GM18951 (cell line): ENCODE measurements at regions of chr5 and their contacts with region 1.

Region 1: GRCh38 chr5:127564002-127564769 is 46.7 kb downstream of the PRRC1 start:
- POLR2A ChIP-seq: no peak

Region 2: GRCh38 chr5:127260686-127261085 is 303.5 kb before region 1 on chr5:
- in situ Hi-C with region 1: no loop called
- POLR2A ChIP-seq: no peak

Region 3: GRCh38 chr5:127757576-127757975 is 193.4 kb after region 1 on chr5:
- in situ Hi-C with region 1: loop called (anchors 5 kb)
- POLR2A ChIP-seq: no peak

Region 4: DNA sequence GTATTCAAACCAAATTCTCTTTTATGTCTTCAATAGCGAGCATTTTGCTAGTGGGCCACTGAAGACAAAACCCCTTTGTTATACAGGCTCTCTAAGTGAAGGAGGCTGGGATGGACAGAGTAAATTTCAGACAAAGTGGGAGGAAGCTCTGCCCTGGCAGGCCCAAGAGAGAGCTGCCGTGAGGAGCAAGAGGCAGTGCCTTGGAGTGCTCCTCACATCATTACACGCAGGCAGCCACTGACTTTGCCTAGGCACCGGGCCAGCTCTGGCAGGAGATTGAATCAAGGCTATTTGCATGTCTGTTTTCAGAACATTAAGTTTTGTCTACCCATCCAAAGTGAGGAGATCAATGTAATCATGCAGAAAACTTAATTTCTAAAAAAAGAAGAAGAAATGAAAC is 306.7 kb after region 1 on chr5:
- in situ Hi-C with region 1: loop called (anchors 25 kb)
- POLR2A ChIP-seq: no peak

Region 5: GRCh38 chr5:128201065-128201926 is 637.1 kb after region 1 on chr5:
- in situ Hi-C with region 1: loop called (anchors 5 kb)
- POLR2A ChIP-seq: no peak

Region 6: DNA sequence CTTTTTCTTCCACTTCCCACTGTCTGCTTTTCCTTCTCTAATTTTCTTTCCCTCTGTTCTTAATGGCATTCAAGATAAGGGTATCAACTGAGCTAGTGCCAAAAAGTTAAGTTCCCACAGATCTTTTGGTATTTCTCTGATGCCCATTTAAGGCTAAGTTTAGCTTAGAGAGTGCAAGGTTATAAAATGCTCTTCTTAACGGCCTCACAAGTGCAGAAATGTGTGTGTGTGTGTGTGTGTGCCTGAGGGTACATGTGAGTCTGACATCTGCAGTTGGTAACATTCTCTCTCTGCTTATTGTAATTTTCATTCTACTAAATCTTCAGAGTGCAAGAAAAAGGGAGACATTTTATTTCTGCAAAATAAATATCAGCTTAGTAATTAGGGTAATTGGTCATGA is 949.6 kb after region 1 on chr5:
- in situ Hi-C with region 1: loop called (anchors 25 kb)
- POLR2A ChIP-seq: no peak